ENCODE measurements at regions of chr12 and their contacts with region 1.

Region 1: GRCh38 chr12:44015335-44015941 is 179.6 kb downstream of the TMEM117 start:
- DNase-seq: peak; percentile 79
- ATAC-seq: peak; percentile 70
- H3K4me3 ChIP-seq: no peak overlapping the region
- H3K27ac ChIP-seq: no peak overlapping the region
- H3K4me1 ChIP-seq: no peaks in the 10 kb centered on the region
- H3K27me3 ChIP-seq: no peaks in the 10 kb centered on the region
- CTCF ChIP-seq: peak; percentile 73

Region 2: DNA sequence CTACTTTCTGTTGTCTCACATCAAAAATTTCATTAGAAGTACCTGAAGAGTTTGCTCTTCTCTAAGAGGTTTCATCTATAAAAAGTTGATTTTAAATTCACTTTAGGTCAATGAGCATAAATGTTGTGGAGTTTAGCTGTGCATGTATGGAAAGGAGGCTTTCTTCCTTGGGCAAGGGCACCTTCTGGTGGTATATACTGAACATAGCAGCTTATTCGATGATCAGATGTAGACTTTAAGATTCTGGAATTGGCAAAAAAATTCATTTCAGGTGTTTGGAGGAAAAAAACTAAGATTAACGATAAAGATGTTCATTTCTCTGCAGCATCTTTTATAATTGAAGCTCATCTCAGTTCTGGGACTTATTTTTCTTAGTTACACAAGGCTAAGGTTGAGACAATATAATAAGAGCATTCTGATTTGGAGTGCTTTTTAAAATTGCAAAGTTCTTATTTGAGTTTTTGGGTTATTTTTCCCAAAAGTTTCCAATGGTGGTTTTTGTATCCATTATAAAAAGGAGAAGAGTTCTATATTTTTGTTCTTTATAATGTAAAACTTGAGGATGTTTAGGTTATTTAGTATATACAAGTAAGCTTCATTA is 132.8 kb before region 1 on chr12:
- CTCF ChIA-PET with region 1: no interaction called
- POLR2A ChIA-PET with region 1: no interaction called
- intact Hi-C with region 1: no loop called
- DNase-seq: peak; percentile 75
- ATAC-seq: peak; percentile 82
- H3K4me3 ChIP-seq: no peak overlapping the region
- H3K27ac ChIP-seq: no peak overlapping the region
- H3K4me1 ChIP-seq: no peaks in the 10 kb centered on the region
- H3K27me3 ChIP-seq: no peaks in the 10 kb centered on the region
- CTCF ChIP-seq: peak; percentile 91

Region 3: DNA sequence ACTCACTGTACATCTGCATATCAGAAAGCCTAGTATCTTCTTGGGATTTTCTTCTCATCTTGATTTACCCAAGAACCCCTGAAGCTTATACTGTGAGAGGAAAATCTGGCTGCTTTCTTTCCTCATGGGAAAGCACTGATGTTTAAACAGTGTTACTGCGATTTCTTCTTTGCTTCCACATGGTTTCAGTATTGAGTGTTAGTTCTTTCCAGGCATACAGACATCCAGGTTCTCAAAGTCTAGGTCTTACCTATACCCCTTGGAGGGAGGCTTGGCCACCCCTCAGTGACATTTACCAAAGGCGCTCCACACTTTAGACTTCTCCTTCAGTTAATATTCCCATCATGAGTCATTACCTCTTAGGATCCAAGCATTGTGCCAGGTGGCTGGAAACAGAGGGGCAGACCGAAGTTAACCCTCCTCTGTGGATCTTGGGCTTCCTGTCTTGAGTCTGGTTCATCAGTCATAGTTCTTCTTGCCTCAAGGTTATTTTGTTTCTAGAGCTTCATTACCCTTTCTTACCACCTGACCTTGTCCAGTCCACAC is 100.4 kb before region 1 on chr12:
- CTCF ChIA-PET with region 1: no interaction called
- POLR2A ChIA-PET with region 1: no interaction called
- intact Hi-C with region 1: no loop called
- DNase-seq: peak; percentile 22
- ATAC-seq: peak; percentile 61
- H3K4me3 ChIP-seq: no peak overlapping the region
- H3K27ac ChIP-seq: no peak overlapping the region
- H3K4me1 ChIP-seq: no peaks in the 10 kb centered on the region
- H3K27me3 ChIP-seq: no peaks in the 10 kb centered on the region
- CTCF ChIP-seq: peak; percentile 59

Region 4: DNA sequence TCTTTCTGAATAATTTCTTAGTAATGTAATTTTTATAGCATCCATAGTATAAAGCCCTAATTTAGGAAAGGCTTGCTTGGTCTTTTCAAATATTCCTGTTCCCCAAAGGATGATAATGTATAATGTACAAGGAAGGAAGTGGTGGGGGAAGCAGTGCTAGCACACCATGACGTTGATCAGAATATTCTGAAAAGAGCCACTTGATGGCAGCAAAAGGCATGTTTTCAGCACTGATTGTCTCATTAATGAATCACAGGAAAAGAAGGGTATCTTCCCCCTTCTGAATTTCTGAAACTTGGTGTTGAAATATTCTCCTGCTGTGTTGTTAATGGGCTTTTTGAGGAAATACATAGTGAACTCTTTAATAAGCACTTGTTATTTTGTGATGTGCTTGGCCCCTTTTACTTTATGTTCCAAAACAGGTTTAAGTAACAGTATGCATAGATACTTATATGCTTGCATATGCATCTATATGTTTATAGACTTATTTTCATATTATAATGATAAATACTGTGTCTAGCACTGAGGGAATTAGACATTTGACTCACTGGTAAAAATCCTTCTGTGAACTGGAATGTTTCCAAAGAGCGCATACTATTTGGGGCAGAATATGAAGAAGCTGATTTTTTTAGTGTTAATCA is 57.6 kb before region 1 on chr12:
- CTCF ChIA-PET with region 1: no interaction called
- POLR2A ChIA-PET with region 1: no interaction called
- intact Hi-C with region 1: loop called (anchors 5 kb)
- DNase-seq: peak; percentile 79
- ATAC-seq: peak; percentile 87
- H3K4me3 ChIP-seq: no peak overlapping the region
- H3K27ac ChIP-seq: no peak overlapping the region
- H3K4me1 ChIP-seq: no peaks in the 10 kb centered on the region
- H3K27me3 ChIP-seq: no peaks in the 10 kb centered on the region
- CTCF ChIP-seq: peak; percentile 83

Region 5: DNA sequence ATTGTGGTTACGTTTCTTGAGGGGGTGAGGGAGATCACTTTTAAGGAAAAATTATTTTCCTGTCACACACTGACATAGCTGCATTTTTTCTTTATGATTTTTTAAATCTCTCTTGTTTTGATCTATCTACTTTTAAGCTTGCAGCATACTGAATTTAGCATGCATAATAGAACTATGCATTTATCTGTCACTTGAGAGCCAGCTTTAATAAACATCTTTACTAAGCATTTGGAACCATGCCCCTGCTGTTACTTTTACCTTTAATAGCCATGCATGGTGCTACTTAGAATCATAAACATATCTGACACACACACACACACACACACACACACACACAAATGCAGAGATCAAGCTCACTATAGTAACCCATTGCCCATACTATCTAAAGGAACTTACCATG is 374.5 kb after region 1 on chr12:
- CTCF ChIA-PET with region 1: no interaction called
- POLR2A ChIA-PET with region 1: no interaction called
- intact Hi-C with region 1: loop called (anchors 5 kb)
- DNase-seq: no peak
- ATAC-seq: no peak
- H3K4me3 ChIP-seq: no peak overlapping the region
- H3K27ac ChIP-seq: no peak overlapping the region
- H3K4me1 ChIP-seq: no peaks in the 10 kb centered on the region
- H3K27me3 ChIP-seq: no peaks in the 10 kb centered on the region
- CTCF ChIP-seq: no peak

Region 6: DNA sequence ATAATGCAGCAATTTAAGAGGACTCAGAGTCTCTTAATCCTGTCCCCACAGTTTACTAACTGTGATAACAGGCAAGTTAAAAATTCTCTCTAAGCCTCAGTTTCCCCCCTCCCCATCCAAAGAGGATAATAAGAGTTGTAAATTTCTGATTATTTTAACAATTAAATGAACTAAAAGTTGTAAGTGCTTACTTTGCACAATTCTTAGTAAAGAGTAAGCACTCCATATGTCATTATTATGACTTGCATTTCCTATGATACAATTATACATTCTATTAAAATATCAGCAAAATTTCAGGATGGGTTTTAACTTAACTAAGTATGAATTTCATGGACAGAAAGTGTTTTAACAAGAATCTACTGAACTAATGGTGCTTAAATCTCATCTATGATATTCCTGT is 780.5 kb after region 1 on chr12:
- CTCF ChIA-PET with region 1: interaction called, 17 read pairs
- POLR2A ChIA-PET with region 1: no interaction called
- intact Hi-C with region 1: no loop called
- DNase-seq: no peak
- ATAC-seq: no peak
- H3K4me3 ChIP-seq: no peak overlapping the region
- H3K27ac ChIP-seq: no peak overlapping the region
- H3K4me1 ChIP-seq: no peaks in the 10 kb centered on the region
- H3K27me3 ChIP-seq: peaks cover 24% of the 10 kb centered on the region
- CTCF ChIP-seq: no peak

Region 7: DNA sequence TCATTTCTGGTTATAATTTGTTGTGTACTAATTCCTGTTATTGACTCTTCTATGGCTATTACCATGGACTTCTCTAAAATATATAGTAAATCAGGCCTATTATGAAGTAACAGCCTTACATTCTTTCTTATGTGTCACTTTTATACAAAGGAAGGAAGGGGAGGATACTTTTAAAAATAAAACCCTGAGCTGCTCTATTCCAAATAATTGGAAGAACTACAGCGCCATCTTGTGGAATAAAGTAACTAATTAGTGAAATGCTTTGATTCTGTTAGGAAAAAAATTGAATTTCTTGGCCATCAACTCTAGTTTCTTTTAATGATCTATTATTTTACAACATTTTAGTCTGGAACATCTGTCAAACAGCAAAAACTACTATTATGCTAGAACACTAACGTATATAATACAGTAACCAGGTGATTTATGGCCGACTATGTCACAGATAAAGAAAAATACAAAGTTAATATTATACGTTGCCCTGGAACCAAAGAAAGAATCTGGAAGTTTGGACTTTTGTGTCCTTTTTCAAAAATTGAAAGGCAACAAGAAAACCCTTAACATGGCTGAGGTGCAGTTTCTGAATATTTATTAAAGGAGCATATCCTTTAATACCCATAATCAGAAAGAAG is 915.6 kb after region 1 on chr12:
- CTCF ChIA-PET with region 1: interaction called, 4 read pairs
- POLR2A ChIA-PET with region 1: no interaction called
- intact Hi-C with region 1: loop called (anchors 1 kb)
- DNase-seq: peak; percentile 86
- ATAC-seq: peak; percentile 76
- H3K4me3 ChIP-seq: no peak overlapping the region
- H3K27ac ChIP-seq: no peak overlapping the region
- H3K4me1 ChIP-seq: no peaks in the 10 kb centered on the region
- H3K27me3 ChIP-seq: peaks cover 9% of the 10 kb centered on the region; the same call in 1 of the 2 replicates
- CTCF ChIP-seq: peak; percentile 80